ENCODE measurements at regions of chr14 and their contacts with region 1.

Region 1: DNA sequence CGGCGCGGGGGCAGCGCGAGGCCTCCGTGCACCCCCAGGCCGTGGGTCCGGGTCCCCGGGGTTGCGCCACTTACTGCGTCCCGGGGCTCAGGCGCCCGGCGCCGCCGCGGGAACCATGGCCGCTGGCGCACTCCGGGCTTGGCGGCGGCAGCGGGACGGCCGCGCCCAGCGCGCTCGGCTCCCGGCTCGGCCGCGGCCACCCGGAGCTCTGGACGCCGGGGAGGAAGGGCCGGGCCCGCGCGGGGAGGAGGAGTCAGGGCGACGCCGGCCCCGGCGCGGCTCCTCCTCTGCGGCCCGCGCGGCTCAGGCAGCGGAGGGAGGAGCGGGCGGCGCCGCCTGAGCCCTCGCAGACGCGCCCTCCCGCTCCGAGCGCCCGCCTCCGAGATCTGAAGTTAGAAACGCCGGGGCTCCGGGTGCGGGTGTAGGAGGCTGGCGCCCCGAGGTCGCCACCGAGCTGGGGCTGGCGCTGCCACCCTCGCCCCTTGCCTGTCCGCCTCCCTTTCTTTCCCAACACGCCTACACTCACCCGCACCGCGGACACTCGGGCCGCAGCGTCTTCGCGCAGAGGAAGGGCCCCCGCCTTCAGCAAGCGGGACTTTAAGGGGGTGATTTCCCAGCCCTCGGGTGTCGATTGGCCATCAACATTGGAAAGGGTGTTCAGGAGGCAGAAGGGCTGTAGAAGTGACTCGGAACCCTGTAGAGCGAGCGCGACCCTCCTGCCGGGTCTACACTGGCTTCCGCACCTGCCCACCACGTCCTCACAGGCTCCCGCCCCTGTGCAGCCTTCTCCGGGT is at the start of gene NIN:
- DNase-seq: peak; percentile 65 to 82 (median 72)
- H3K4me3 ChIP-seq: peak within 1 kb of the TSS; percentile 69
- H3K4me3 Mint-ChIP-seq: peak within 1 kb of the TSS; percentile 94 to 99 (median 97)
- H3K27ac ChIP-seq: peak within 1 kb of the TSS; percentile 76
- H3K27ac Mint-ChIP-seq: peak within 1 kb of the TSS; percentile 92 to 99 (median 97)
- H3K4me1 ChIP-seq: peaks cover 58% of the 10 kb centered on the region
- H3K4me1 Mint-ChIP-seq: peaks cover 49 to 70% (median 65%) of the 10 kb centered on the region in 3 donors
- H3K27me3 ChIP-seq: no peaks in the 10 kb centered on the region
- H3K27me3 Mint-ChIP-seq: no peaks in the 10 kb centered on the region
- total RNA-seq, gene NIN: 73.8 to 77.8 TPM

Region 2: GRCh38 chr14:50714450-50715073 is 116.6 kb before region 1 on chr14:
- CTCF ChIA-PET with region 1: no interaction called
- POLR2A ChIA-PET with region 1: no interaction called
- DNase-seq: no peak
- H3K4me3 ChIP-seq: no peak overlapping the region
- H3K4me3 Mint-ChIP-seq: no peak overlapping the region
- H3K27ac ChIP-seq: no peak overlapping the region
- H3K27ac Mint-ChIP-seq: no peak overlapping the region
- H3K4me1 ChIP-seq: no peaks in the 10 kb centered on the region
- H3K4me1 Mint-ChIP-seq: no peaks in the 10 kb centered on the region
- H3K27me3 ChIP-seq: no peaks in the 10 kb centered on the region
- H3K27me3 Mint-ChIP-seq: peaks cover 0 to 4% of the 10 kb centered on the region in 2 donors

Region 3: DNA sequence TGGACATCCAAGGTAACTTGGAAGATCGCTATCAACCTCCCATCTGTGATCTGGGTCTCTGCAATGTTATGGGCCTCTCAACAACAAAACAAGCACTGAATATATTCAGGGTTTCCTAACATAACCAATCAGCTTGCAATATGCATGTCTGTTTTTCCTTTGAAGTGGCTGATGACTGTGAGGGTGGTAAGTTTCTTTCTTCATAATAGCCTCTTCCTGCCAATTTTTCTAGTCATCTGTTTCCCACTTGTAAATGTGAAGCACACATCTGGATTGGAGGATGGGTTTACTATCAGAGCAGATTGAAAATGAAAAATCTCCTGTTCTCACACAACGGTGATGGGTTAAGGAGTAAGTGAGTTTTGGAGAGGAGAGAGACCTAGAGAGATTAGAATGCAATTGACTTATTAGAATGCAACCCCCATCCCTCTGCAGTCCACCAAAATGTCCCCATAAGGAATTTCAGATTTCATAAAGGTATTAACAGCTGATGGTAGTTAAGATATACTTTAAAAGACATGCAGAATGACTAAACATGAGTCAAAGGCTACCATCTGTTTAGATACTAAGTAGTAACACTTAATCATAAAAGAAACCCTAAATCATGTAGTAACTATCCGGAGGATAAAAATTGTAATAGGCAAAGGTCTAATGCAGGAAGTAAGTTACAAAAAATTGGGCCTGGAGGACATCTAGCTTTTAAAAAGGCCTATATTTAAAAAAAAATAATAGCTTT is 104.6 kb before region 1 on chr14:
- CTCF ChIA-PET with region 1: no interaction called
- POLR2A ChIA-PET with region 1: no interaction called
- DNase-seq: peak in 2 of 5 donors; percentile 21 to 58
- H3K4me3 ChIP-seq: no peak overlapping the region
- H3K4me3 Mint-ChIP-seq: peak overlapping the region; percentile 0 to 71 (median 16)
- H3K27ac ChIP-seq: no peak overlapping the region
- H3K27ac Mint-ChIP-seq: peak overlapping the region; percentile 57 to 95 (median 78)
- H3K4me1 ChIP-seq: peaks cover 11% of the 10 kb centered on the region
- H3K4me1 Mint-ChIP-seq: peaks cover 20 to 31% (median 28%) of the 10 kb centered on the region in 3 donors
- H3K27me3 ChIP-seq: no peaks in the 10 kb centered on the region
- H3K27me3 Mint-ChIP-seq: no peaks in the 10 kb centered on the region

Region 4: DNA sequence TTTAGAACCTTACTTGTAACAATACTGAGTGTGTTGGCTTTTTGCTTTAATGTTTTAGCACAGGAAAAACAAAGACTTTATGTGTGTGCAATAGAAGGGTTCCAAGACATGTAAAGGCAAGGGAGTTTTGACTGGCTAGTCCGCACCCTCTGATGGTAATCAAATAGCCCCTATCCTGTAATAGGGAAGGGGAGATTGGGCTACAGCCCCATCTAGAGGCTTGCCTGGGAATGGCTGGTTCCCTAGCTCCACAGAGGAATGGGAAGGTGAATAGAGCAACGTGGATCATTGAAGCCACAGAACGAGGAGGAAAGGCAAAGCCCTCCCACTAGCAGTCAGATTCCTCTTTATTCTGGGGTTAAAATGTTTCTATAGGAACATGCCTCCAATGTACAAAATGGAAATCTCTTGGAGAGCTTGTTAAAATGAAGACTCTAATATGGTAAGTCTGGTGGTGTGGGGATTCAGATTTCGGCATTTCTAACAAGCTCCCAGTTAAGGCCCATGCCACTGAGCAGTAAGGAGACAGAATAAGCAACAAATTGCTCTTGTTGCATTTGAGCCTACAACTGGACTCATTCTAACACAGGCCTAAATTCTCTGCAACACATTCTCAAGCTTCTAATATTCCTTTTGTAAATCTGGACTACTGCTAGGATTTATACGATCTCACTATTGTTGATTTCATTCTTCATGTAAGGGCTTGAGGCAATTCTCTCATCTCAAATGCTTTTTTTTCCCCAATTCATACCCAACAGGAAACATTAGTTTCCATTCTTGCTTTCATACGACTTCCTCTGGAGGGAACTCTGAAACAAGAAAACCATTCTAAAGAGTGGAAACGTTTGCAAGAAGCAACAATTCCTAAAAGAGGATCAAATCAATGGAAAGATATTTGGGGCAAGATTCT is 57.2 kb before region 1 on chr14:
- CTCF ChIA-PET with region 1: interaction called, 13 read pairs
- POLR2A ChIA-PET with region 1: interaction called, 9 read pairs
- DNase-seq: no peak
- H3K4me3 ChIP-seq: no peak overlapping the region
- H3K4me3 Mint-ChIP-seq: no peak overlapping the region
- H3K27ac ChIP-seq: no peak overlapping the region
- H3K27ac Mint-ChIP-seq: peak overlapping the region in 7 of 8 donors; percentile 33 to 82 (median 70)
- H3K4me1 ChIP-seq: peaks cover 21% of the 10 kb centered on the region
- H3K4me1 Mint-ChIP-seq: peaks cover 17 to 38% (median 27%) of the 10 kb centered on the region in 3 donors
- H3K27me3 ChIP-seq: no peaks in the 10 kb centered on the region
- H3K27me3 Mint-ChIP-seq: no peaks in the 10 kb centered on the region

Region 5: DNA sequence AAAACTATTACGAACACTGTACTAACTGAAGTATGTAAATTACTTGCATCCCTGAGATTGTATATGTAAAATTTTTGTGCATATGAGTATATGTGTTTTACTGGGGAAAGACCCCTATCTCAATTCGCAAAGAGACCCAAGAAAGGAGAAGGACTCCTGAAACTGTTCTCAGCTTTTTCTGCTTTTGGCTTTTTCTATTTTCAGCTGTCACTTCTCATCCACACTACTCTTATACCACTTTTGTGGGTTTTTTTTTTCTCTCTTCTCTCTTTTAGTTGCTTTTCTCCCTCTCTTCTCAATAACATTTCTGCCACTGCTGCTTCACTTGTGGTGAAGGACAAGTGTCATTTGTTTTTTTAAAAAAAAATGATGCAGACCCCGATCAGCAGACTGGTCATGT is 39.9 kb before region 1 on chr14:
- CTCF ChIA-PET with region 1: interaction called, 34 read pairs
- POLR2A ChIA-PET with region 1: interaction called, 13 read pairs
- DNase-seq: no peak
- H3K4me3 ChIP-seq: no peak overlapping the region
- H3K4me3 Mint-ChIP-seq: peak overlapping the region in 6 of 7 donors; percentile 53 to 88 (median 72)
- H3K27ac ChIP-seq: no peak overlapping the region
- H3K27ac Mint-ChIP-seq: peak overlapping the region; percentile 20 to 95 (median 88)
- H3K4me1 ChIP-seq: peaks cover 68% of the 10 kb centered on the region
- H3K4me1 Mint-ChIP-seq: peaks cover 87 to 100% (median 93%) of the 10 kb centered on the region in 3 donors
- H3K27me3 ChIP-seq: no peaks in the 10 kb centered on the region
- H3K27me3 Mint-ChIP-seq: no peaks in the 10 kb centered on the region

Region 6: GRCh38 chr14:50985124-50985858 is 154.2 kb after region 1 on chr14:
- CTCF ChIA-PET with region 1: no interaction called
- POLR2A ChIA-PET with region 1: no interaction called
- DNase-seq: no peak
- H3K4me3 ChIP-seq: no peak overlapping the region
- H3K4me3 Mint-ChIP-seq: no peak overlapping the region
- H3K27ac ChIP-seq: no peak overlapping the region
- H3K27ac Mint-ChIP-seq: peak overlapping the region in 1 of 8 donors; percentile 75
- H3K4me1 ChIP-seq: no peaks in the 10 kb centered on the region
- H3K4me1 Mint-ChIP-seq: no peaks in the 10 kb centered on the region
- H3K27me3 ChIP-seq: no peaks in the 10 kb centered on the region
- H3K27me3 Mint-ChIP-seq: peaks cover 4 to 39% of the 10 kb centered on the region in 2 donors